ENCODE measurements at regions of chr16 and their contacts with region 1.

Region 1: DNA sequence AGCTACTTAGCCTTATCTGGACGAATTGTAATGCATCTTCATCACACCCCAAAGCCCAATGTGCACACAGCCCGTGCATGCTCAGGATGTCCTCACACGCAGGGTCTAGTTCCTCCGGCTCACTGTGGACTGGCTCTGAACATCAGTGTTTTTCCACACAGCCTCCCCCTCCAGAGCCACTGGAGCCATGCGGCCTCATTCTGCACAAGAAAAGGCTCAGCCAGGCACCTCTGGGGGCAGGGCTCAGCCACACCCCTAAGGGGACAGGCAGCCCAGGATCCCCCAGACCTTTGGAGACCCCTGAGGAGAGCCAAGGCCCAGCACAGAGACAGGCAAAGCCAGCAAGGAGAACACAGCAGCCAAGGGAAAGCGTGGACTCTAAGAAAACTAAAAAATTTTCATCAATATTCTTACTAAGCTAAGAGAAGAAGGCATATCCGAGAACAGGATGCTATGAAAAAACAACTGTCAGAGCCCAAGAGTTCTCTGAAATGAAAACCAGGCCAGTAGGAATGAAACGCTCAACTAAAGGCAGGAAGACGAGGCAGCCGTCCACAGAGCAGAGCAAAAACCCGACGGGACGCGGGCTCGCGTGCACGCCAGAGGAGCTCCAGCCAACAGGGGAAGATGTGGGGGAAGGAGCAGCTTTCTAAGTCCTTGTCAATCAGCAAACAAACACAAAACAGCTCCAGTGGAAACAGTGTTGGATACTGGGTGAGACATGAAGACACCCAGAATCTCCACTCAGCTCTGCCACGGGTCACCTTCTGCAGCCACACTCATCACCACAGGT is 34.5 kb downstream of the MAP1LC3B start:
- DNase-seq: no peak
- H3K4me3 ChIP-seq: peak overlapping the region in 1 of 4 experiments; percentile 3; a peak in 1 of 8 replicates
- H3K27ac ChIP-seq: 0 out of 2 replicates have a peak overlapping the region, but pooled peaks have one; percentile 39
- H3K4me1 ChIP-seq: peaks cover 5 to 17% (median 11%) of the 10 kb centered on the region in 4 experiments
- H3K27me3 ChIP-seq: no peaks in the 10 kb centered on the region
- CTCF ChIP-seq: no peak
- EP300 ChIP-seq: no peak
- POLR2A ChIP-seq: no peak
- RAD21 ChIP-seq: no peak

Region 2: DNA sequence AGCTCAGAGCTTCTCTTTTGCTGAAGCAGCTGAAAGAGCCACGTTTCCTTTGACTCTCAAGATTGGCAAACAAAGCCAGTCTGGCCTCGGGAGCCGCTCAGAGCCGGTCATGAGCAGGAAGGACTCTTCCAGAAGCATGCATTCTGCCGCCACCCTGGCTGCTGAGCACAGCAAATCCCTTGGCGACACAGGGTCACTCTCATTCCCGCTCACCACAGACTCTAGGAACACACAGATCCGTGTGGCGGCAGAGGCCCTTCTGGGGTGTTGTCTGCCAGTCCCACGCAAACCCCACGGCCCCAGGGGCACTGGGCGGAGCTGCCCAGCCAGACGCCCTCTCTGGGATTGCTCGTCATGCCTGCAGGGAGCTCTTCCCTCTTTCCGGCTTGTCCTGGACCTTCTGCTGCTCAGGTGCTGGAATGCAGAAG is 266.4 kb before region 1 on chr16:
- CTCF ChIA-PET with region 1: no interaction called
- POLR2A ChIA-PET with region 1: no interaction called
- DNase-seq: no peak
- H3K4me3 ChIP-seq: no peak overlapping the region
- H3K27ac ChIP-seq: no peak overlapping the region
- H3K4me1 ChIP-seq: no peaks in the 10 kb centered on the region
- H3K27me3 ChIP-seq: no peaks in the 10 kb centered on the region
- CTCF ChIP-seq: no peak
- EP300 ChIP-seq: no peak
- POLR2A ChIP-seq: no peak
- RAD21 ChIP-seq: no peak

Region 3: DNA sequence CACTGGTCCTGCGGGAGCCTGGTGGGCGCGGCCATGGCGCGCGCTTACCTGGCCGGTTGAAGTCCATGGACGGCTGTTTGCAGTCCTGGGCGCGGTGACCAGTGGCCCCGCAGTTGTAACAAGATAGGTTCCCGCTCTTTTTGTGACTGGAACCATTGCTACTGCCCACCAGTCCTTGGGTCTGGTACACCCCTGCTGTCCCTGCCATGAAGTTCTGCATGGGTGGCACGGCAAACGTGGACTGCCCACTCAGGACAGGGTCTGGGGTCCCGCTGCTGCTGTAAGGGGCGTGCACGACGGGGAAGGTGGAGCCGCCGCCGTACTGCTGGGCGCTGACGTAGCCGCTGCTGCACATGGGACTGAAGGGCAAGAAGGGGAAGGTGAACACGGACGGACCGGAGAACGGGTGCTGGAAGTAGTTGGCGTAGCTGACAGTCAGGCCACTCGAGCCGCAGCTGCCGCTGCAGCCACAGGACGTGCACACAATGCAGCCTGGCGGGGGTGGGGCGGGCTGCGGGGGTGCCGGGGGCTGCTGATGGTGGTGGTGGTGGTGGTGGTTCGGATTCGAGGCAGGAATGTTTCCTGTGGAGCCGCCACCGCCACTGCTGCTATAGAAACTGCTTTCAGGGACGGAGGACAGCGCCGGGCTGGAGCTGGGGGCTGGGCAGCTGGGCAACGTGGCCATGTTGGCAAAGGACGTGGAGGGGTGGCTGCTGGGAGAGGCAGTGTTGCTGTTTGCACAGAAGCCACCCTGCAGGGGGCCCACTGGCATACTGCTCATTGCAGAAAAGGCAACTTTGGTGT is 14.9 kb before region 1 on chr16:
- CTCF ChIA-PET with region 1: interaction called, 11 read pairs
- POLR2A ChIA-PET with region 1: interaction called, 4 read pairs
- DNase-seq: no peak
- H3K4me3 ChIP-seq: no peak overlapping the region
- H3K27ac ChIP-seq: no peak overlapping the region
- H3K4me1 ChIP-seq: no peaks in the 10 kb centered on the region
- H3K27me3 ChIP-seq: no peaks in the 10 kb centered on the region
- CTCF ChIP-seq: no peak
- EP300 ChIP-seq: no peak
- POLR2A ChIP-seq: no peak
- RAD21 ChIP-seq: no peak